A549 (cell line): ENCODE measurements at regions of chr12 and their contacts with region 1.

Region 1: GRCh38 chr12:48890657-48891418 is 25.2 kb upstream of the RND1 start:
- DNase-seq: peak in 1 of 2 experiments; percentile 80
- ATAC-seq: peak; percentile 97 to 98
- H3K4me3 ChIP-seq: peak overlapping the region; percentile 38
- H3K27ac ChIP-seq: peak overlapping the region; percentile 51 to 76
- H3K4me1 ChIP-seq: peaks cover 24% of the 10 kb centered on the region
- CTCF ChIP-seq: peak; percentile 94
- EP300 ChIP-seq: no peak
- POLR2A ChIP-seq: no peak
- RAD21 ChIP-seq: peak; percentile 98 to 99

Region 2: GRCh38 chr12:48832321-48833060 is 58.3 kb before region 1 on chr12:
- CTCF ChIA-PET with region 1: interaction called, 42 read pairs
- POLR2A ChIA-PET with region 1: no interaction called
- DNase-seq: no peak
- ATAC-seq: no peak
- H3K4me3 ChIP-seq: no peak overlapping the region
- H3K27ac ChIP-seq: no peak overlapping the region
- H3K4me1 ChIP-seq: 0 out of 3 replicates have a peak, but pooled peaks cover 4% of the 10 kb centered on the region
- CTCF ChIP-seq: no peak
- EP300 ChIP-seq: no peak
- POLR2A ChIP-seq: no peak
- RAD21 ChIP-seq: no peak

Region 3: DNA sequence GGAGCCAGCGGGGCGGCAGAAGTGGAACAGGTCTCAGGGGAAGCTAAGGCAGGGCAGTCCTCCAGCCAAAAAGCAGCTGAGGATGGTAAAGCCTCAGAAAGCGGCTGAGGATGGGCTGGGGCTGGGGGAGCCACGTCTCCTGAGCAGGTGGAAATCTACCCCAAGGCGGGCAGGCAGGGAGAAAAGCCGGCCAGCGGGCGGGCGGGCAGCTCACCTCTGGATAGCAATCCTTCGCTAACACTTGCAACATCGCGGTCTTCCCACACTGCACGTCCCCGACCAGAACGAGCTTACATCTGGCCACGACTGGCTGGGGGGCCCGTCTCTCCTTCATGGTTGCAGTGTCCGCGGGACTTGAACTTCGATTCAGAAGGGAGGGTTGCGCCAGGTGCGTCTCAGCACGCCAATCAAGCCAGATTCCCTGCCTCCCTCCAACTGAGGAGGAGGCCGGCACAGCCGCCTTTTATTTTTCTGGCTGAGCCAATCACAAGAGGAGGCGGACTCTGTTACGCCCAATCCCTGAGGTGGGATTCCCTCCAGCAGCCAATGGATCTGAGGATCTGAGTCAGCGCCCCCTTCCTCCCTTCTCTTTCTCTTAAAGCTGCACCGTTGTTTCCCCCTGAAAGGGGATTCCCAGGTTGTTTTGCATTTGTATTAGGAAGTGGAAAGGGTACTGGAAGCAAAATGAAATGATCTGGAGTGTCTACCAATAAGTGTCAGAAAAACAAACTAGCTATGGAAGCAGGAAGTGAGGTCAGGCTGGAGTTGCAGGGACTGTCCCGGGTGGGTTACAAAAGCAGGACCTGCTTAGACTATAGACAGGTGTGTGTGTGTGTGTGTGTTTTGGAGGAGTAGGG is 25.2 kb before region 1 on chr12 and contains the start of gene RND1:
- CTCF ChIA-PET with region 1: interaction called, 1,365 read pairs
- POLR2A ChIA-PET with region 1: interaction called, 63 read pairs
- DNase-seq: peak; percentile 93 to 98
- ATAC-seq: peak; percentile 87 to 89
- H3K4me3 ChIP-seq: peak within 1 kb of the TSS; percentile 68
- H3K27ac ChIP-seq: peak within 1 kb of the TSS; percentile 83 to 86
- H3K4me1 ChIP-seq: peaks cover 68% of the 10 kb centered on the region
- CTCF ChIP-seq: no peak
- EP300 ChIP-seq: no peak
- POLR2A ChIP-seq: peak; percentile 100
- RAD21 ChIP-seq: no peak
- polyA plus RNA-seq, gene RND1: 37.8 and 54.5 TPM in 2 replicates

Region 4: GRCh38 chr12:48924617-48925303 is 33.9 kb after region 1 on chr12:
- CTCF ChIA-PET with region 1: interaction called, 26 read pairs
- POLR2A ChIA-PET with region 1: no interaction called
- DNase-seq: peak; percentile 59 to 62
- ATAC-seq: peak; percentile 84 to 86
- H3K4me3 ChIP-seq: peak overlapping the region; percentile 71
- H3K27ac ChIP-seq: peak overlapping the region; percentile 77 to 95
- H3K4me1 ChIP-seq: peaks cover 6% of the 10 kb centered on the region; the same call in 1 of the 3 replicates
- CTCF ChIP-seq: peak; percentile 31; the same call in 2 of the 3 replicates
- EP300 ChIP-seq: no peak
- POLR2A ChIP-seq: no peak
- RAD21 ChIP-seq: peak; percentile 35 to 38; a peak in 3 of 5 replicates

Region 5: DNA sequence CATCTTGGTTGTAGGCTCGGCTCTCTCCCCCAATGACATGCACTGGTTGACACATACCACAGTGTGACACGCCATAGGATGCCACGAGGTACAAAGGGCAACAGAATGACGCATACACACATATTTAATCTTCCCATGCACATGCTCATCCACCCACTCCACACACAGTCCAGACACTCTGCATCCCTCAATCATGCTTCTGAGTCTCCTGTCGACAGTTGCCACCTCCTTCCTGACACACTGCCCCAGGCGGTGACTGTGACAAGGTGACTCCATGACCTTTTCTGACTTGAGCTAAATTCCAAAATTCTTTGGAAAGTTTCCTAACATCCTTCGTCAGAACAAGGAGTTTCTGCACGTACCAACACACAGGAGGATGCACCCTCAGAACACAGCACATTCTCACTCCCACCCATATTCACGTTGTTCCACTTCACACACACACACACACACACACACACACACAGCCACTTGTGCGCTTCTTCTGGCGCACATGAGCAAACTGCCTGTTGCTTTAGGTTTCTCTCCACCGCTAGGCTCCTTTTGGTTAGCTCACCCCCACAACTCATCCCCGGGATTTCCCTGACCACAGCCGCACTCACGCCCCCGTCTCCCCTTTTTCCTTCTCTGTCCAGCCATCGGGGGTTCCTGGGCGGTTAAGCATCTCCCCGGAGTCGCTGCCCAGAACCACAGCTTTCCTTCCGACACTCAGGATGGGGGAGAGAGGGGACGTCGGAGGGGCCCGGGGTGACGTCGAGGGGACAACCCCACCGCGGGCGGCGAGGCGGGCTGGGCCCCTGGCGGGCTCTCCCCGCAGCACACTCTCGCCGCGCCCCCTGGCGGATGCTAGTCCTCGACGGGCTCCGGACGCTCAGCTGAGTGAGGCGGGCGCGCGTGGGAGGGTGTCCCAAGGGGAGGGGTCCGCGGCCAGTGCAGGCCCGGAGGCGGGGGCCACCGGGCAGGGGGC is 86.8 kb after region 1 on chr12:
- CTCF ChIA-PET with region 1: interaction called, 14 read pairs
- POLR2A ChIA-PET with region 1: no interaction called
- DNase-seq: peak; percentile 64 to 74
- ATAC-seq: peak; percentile 69 to 85
- H3K4me3 ChIP-seq: peak overlapping the region; percentile 42; the same call in 2 of the 3 replicates
- H3K27ac ChIP-seq: 0 out of 6 replicates have a peak overlapping the region, but pooled peaks of 1 of the 2 experiments have one; percentile 31
- H3K4me1 ChIP-seq: peaks cover 16% of the 10 kb centered on the region; the same call in 2 of the 3 replicates
- CTCF ChIP-seq: peak; percentile 70
- EP300 ChIP-seq: no peak
- POLR2A ChIP-seq: no peak
- RAD21 ChIP-seq: peak in 1 of 2 experiments; percentile 39; a peak in 3 of 5 replicates

Region 6: DNA sequence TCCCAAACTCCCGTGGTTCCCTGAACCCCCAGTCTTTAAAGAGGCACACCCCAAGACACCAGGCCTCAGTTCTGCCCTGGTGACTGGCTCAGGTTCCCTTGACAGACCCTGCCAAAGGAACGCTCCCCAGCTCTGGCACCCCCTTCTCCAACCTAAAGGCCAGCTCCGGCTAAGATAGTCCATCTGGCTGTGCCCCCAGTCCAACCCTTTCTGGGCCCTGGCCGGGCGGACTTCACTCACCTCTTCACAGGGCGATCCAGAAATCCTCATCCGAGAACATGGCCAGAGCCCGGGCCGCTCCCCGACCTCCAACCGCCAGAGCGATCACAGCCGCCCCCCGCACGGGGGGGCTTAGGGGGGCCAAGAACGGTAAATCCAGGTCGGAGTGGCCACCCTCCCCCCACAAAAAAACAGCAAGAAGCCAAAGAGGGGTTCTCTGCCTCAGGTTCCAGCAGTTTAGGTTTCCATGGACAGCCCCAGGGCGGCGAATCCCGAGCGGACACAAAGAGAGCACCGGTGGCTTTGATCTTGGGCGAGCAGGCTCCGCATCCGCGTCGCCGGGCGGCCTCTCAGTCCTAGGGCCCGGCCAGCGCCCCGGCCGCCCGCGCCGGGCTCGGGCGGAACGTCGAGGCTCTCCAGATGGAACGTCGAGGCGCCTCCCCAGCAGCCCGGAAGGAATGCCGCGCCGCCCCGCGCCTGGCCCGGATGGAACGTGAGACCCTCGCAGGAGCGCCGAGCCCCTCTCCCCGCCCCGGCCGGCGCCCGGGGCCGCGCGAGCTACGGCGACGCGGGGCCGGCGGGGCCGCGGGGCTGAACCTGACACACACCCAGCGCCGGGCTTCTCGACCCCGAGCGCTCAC is 168.8 kb after region 1 on chr12:
- CTCF ChIA-PET with region 1: no interaction called
- POLR2A ChIA-PET with region 1: no interaction called
- DNase-seq: peak; percentile 34 to 40
- ATAC-seq: peak; percentile 4 to 12; a peak in 4 of 6 replicates
- H3K4me3 ChIP-seq: peak overlapping the region; percentile 81
- H3K27ac ChIP-seq: peak overlapping the region; percentile 94 to 99
- H3K4me1 ChIP-seq: peaks cover 34% of the 10 kb centered on the region
- CTCF ChIP-seq: no peak
- EP300 ChIP-seq: no peak
- POLR2A ChIP-seq: no peak
- RAD21 ChIP-seq: no peak